Head of caudate nucleus (tissue), 42 donors: ENCODE measurements at regions of chr16 and their contacts with region 1.

Region 1: DNA sequence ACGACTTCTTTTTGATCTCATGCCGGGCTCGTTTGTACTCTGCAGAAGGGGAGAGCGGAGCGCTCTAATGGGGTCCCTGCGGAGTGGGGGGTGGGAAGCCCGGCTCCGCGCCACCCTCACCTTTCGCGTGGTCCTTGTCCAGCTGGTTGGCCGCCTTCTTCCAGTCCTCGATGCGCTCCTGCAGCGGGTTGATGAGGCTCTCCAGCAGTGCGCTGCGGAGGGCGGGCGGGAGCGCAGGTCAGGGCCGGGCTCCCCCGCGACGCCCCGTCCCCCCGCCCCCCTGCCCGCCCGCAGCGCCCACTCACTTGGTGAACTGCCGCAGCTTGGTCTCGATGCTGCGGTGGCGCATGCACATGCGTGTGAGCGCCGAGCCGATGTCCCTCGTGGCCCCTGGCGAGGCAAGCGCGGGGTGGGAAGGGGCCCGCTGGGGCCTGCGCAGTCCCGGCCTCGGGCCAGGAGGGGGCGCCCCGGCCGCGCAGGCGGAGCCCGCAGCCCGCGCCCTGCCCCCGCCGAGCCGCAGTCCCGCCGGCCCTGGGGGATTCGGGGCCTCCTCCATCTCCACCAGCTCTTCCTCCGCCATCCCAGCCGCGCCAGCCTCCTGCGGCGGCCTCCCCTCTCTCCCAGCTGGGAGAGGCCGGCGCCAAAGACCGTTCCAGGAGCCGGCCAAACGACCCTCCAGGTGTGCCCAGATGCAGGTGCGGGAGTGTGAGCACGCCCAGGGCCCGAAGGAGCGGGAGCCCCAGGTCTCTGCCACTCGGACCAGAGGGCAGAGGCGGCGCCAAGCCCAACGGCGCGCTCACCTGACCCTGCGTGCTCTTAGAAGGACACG is 6.0 kb downstream of the MTSS2 start:
- DNase-seq: peak in 11 of 42 donors; percentile 7 to 69 (median 49)

Region 2: GRCh38 chr16:70561623-70562022 is 118.3 kb before region 1 on chr16:
- intact Hi-C with region 1: no loop called
- DNase-seq: peak in 22 of 42 donors; percentile 6 to 71 (median 27)

Region 3: GRCh38 chr16:70725912-70726828 is 46.3 kb after region 1 on chr16:
- intact Hi-C with region 1: loop called (anchors 5 kb)
- DNase-seq: peak; percentile 69 to 94 (median 86)

Region 4: DNA sequence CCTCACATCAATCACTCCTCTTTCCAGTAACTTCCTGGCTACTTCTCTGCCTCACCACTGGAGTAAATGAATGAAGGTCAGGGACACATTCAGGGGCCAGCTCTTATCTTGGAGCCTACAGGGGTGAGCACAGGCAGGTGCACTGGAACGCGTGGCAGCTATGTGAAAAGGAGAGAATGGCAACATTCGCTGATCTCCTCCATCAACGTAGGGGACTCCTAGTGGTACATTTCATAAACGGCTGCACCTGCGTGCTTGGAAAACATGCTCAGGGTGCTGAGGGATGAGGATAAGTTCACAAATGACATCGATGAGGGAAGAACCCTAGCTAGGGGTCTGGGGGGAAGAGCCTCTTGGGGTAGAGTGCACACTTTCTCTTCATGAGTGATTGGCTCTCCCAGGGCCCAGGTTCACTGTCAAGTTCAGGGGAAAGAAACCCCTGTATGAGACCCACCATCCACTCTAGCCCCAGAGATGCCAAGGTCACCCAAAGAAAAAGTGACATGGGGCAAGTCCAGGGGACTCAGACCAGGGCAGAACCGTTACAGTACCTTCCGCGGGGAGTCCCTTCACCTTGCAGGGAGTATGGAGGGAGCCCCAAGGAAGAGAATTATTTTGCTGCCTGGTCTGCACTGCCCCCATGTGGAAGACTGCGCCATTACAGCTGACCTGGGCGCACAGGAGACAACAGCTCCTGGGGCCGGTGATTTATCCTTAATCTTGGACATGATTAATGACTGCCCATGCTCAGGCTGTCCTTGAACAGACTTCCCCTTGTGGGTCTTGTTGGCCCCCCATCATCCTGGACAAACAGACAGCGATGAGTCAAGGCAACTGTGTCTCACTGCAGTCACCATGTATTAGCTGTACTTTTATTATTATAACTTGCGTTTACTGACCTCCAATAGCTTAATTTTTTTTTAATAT is 91.0 kb after region 1 on chr16:
- intact Hi-C with region 1: loop called (anchors 2 kb)
- DNase-seq: peak; percentile 40 to 89 (median 75)